Activated CD4-positive, alpha-beta memory T cell treated with anti-CD3 and anti-CD28 coated beads, Interleukin-2, amount 10 ng/mL, durations not matched to agents 7 days and 5 days (primary cell): ENCODE measurements at regions of chrX and their contacts with region 1.

Region 1: GRCh38 chrX:153609917-153610428 is 11.0 kb upstream of the CCNQ start:
- DNase-seq: peak; percentile 72
- H3K4me3 Mint-ChIP-seq: peak overlapping the region; percentile 71
- H3K27ac Mint-ChIP-seq: no peak overlapping the region
- H3K4me1 Mint-ChIP-seq: peaks cover 12% of the 10 kb centered on the region
- H3K27me3 Mint-ChIP-seq: peaks cover 16% of the 10 kb centered on the region

Region 2: DNA sequence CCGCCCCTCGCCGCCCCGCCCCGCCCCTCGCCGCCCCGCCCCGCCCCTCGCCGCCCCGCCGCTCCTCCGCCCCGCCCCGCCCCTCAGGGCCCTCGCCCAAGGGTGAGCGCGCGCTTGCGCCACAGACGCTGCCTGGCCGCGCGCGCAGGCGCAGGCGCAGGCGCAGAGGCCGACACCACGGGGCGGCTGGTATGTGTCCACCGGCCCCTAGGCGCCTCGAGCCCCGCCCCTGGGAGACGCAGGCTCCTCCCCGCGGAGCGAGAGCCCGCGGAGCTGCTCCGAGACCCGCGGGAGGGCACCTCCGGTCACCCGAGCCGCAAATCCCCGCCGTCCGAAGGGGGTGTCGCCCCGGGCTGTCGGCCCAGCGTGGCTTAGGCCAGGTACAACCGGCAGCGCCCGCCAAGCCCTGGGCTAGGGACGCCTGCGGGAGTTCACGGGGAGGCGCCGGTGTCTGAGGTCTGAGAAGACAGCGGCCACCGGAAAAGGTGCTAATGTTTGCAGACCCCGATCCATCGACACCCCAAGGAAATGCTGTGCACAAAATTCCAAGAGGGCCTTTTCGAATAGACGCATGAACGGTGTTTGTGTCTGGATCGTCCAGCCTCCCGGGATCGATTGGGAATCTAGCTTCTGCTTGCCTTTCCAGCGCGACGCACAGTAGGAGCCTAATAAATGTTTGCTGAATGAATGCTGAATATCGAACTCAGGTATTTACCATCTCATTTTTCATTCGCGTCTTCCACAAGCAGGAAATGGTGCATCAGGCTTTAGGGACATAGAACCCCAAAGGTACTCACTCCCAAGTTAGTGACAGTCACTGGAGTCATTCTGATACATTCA is 10.6 kb before region 1 on chrX:
- CTCF ChIA-PET with region 1: interaction called, 24 read pairs
- POLR2A ChIA-PET with region 1: interaction called, 14 read pairs
- DNase-seq: peak; percentile 89
- H3K4me3 Mint-ChIP-seq: peak overlapping the region; percentile 86
- H3K27ac Mint-ChIP-seq: peak overlapping the region; percentile 65
- H3K4me1 Mint-ChIP-seq: peaks cover 55% of the 10 kb centered on the region
- H3K27me3 Mint-ChIP-seq: no peaks in the 10 kb centered on the region

Region 3: GRCh38 chrX:153662266-153662665 is 52.3 kb after region 1 on chrX:
- CTCF ChIA-PET with region 1: interaction called, 17 read pairs
- POLR2A ChIA-PET with region 1: no interaction called
- DNase-seq: peak; percentile 51
- H3K4me3 Mint-ChIP-seq: no peak overlapping the region
- H3K27ac Mint-ChIP-seq: no peak overlapping the region
- H3K4me1 Mint-ChIP-seq: peaks cover 4% of the 10 kb centered on the region
- H3K27me3 Mint-ChIP-seq: peaks cover 36% of the 10 kb centered on the region